B cell (primary cell): ENCODE measurements at regions of chr11 and their contacts with region 1.

Region 1: GRCh38 chr11:105862736-105863367 is 159.2 kb downstream of the MSANTD4 start:
- DNase-seq: peak; percentile 52
- ATAC-seq: no peak
- H3K4me3 ChIP-seq: no peak overlapping the region
- H3K4me3 Mint-ChIP-seq: no peak overlapping the region
- H3K27ac ChIP-seq: no peak overlapping the region
- H3K27ac Mint-ChIP-seq: no peak overlapping the region
- H3K4me1 ChIP-seq: no peaks in the 10 kb centered on the region
- H3K4me1 Mint-ChIP-seq: no peaks in the 10 kb centered on the region
- H3K27me3 ChIP-seq: no peaks in the 10 kb centered on the region
- H3K27me3 Mint-ChIP-seq: no peaks in the 10 kb centered on the region
- CTCF ChIP-seq: peak; percentile 72

Region 2: DNA sequence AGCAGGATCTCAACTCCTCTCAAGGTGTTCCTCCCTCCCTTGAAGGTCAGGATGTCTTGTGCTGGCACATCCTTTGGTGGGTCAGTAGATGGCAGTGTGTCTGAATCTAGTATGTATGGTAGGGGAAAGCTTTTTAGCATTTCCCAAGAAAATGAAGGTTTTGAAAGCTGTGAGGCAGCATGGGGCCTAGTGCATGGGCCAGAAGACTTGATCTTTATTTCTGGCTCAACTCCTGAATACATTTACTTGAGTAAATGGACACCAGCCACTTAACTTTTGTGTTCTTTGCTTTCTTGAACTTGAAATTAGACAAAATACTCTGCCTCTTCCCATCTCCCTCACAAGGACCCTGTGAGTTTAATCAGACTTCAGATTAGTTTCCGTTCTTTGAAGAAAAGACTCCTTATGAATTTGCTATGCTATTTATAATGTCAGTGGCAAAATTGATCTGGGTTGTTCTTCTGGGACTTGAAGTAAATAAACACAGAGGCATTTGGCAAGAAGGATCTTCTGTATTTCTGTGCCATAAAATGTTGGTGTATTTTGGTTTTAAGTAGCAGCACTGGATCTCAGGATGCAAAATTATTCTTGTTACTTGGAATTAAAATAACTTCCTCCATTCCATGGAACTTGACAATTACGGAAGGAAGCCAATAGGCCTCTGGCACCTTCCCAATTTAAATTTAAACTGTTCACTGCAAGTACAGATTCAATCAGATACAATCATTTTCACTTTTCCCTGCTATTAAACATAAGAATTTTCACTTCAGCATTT is 1253.4 kb before region 1 on chr11:
- CTCF ChIA-PET with region 1: interaction called, 14 read pairs
- POLR2A ChIA-PET with region 1: no interaction called
- intact Hi-C with region 1: no loop called
- DNase-seq: peak; percentile 60
- ATAC-seq: peak; percentile 45
- H3K4me3 ChIP-seq: no peak overlapping the region
- H3K4me3 Mint-ChIP-seq: no peak overlapping the region
- H3K27ac ChIP-seq: no peak overlapping the region
- H3K27ac Mint-ChIP-seq: no peak overlapping the region
- H3K4me1 ChIP-seq: no peaks in the 10 kb centered on the region
- H3K4me1 Mint-ChIP-seq: peaks cover 2% of the 10 kb centered on the region
- H3K27me3 ChIP-seq: no peaks in the 10 kb centered on the region
- H3K27me3 Mint-ChIP-seq: no peaks in the 10 kb centered on the region
- CTCF ChIP-seq: peak; percentile 79

Region 3: DNA sequence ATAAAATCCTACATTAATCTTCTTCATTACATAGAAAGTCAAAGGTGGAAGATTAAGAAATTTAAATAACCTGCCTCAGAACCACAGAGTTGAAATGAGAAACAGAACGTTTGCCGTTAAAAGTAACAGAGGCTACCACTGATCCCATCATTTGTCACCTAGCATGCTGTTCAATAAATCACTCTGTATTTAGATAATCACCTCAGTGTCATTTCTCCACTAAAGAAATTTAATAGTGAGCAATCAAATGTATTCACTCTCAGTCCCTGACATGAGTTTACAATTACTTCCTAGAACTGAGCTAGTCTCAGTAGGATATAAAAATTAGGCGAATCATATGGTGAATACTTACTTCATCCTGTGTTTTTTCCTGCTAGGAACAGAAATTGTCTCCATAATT is 10.4 kb before region 1 on chr11:
- CTCF ChIA-PET with region 1: interaction called, 12 read pairs
- POLR2A ChIA-PET with region 1: no interaction called
- intact Hi-C with region 1: no loop called
- DNase-seq: no peak
- ATAC-seq: no peak
- H3K4me3 ChIP-seq: no peak overlapping the region
- H3K4me3 Mint-ChIP-seq: no peak overlapping the region
- H3K27ac ChIP-seq: no peak overlapping the region
- H3K27ac Mint-ChIP-seq: no peak overlapping the region
- H3K4me1 ChIP-seq: no peaks in the 10 kb centered on the region
- H3K4me1 Mint-ChIP-seq: no peaks in the 10 kb centered on the region
- H3K27me3 ChIP-seq: no peaks in the 10 kb centered on the region
- H3K27me3 Mint-ChIP-seq: peaks cover 7% of the 10 kb centered on the region
- CTCF ChIP-seq: no peak